Activated CD4-positive, alpha-beta T cell treated with anti-CD3 and anti-CD28 coated beads, Interleukin-2, amount 10 ng/mL, durations not matched to agents 7 days and 5 days (primary cell): ENCODE measurements at regions of chr13 and their contacts with region 1.

Region 1: DNA sequence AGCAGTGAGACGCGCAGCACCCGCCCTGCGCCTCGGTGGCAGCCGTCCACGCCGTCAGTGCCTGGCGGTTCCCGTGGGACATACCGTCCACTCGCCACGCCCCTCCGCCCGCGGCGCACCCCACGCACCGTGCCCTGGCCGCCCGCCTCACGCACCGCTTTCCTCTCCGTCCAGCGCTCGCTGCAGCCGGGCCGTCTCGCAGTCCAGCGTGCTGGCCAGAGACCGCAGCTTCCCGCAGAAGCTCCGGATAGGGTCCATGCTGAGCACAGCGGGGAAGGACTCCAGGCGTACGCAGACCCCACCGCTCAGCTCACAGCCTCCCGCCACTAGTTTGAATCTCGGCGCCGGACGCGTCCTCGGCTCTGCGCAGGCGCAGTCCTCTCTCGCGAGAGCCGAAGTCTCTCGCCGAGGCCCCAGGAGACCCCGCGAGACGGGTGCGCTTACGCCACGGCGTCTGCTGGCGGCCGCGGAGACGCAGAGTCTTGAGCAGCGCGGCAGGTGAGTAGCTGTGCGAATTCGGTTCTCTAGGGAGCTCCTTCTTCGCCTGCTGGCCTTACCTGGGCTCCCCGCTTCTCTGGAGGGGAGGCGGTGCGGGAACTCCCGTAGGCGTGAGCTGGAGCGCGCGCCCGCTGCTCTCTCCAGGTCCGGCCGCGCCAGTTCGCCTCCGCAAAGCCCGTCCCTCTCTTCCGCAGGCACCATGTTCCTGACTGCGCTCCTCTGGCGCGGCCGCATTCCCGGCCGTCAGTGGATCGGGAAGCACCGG is at the starts of genes MRPL57 and SKA3:
- DNase-seq: peak; percentile 94
- H3K4me3 Mint-ChIP-seq: peak within 1 kb of the TSS; percentile 99
- H3K27ac Mint-ChIP-seq: peak within 1 kb of the TSS; percentile 98
- H3K4me1 Mint-ChIP-seq: peaks cover 31% of the 10 kb centered on the region
- H3K27me3 Mint-ChIP-seq: no peaks in the 10 kb centered on the region
- total RNA-seq, gene MRPL57: 18.7 to 18.8 TPM
- total RNA-seq, gene SKA3: 42.2 to 50.7 TPM

Region 2: DNA sequence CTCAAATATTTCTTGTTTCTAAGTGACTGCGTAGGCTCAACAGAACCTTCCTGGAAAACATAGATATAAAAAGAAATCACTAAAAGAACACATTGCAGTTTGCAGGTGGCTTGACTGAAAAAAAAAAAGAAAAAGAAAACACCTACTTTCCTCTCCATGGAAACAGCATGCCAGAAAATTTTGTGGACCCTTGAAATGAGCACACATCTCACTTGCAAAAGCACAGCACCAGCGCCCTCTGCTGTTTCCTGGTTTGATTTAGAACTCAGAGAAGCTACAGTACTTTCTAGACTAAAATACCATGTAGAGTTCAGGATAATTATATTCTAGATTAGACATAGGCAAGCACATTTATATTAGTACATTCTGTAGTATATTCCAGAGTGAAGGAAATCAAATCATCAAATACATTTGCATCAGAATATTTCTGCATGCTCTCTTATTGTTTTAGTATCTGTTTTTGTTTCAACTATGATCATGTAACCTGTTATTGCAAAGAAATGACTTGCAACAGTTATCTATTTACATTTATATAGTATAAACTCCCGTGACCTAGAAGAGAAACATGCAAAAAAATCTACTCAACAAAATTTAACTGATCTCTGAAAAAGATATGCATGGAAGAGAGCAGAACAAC is 251.5 kb before region 1 on chr13:
- CTCF ChIA-PET with region 1: no interaction called
- POLR2A ChIA-PET with region 1: no interaction called
- DNase-seq: peak; percentile 84
- H3K4me3 Mint-ChIP-seq: no peak overlapping the region
- H3K27ac Mint-ChIP-seq: no peak overlapping the region
- H3K4me1 Mint-ChIP-seq: no peaks in the 10 kb centered on the region
- H3K27me3 Mint-ChIP-seq: no peaks in the 10 kb centered on the region

Region 3: GRCh38 chr13:21149568-21149967 is 26.8 kb before region 1 on chr13:
- CTCF ChIA-PET with region 1: interaction called, 11 read pairs
- POLR2A ChIA-PET with region 1: no interaction called
- DNase-seq: no peak
- H3K4me3 Mint-ChIP-seq: no peak overlapping the region
- H3K27ac Mint-ChIP-seq: no peak overlapping the region
- H3K4me1 Mint-ChIP-seq: peaks cover 8% of the 10 kb centered on the region
- H3K27me3 Mint-ChIP-seq: no peaks in the 10 kb centered on the region

Region 4: GRCh38 chr13:21164631-21165030 is 11.8 kb before region 1 on chr13:
- CTCF ChIA-PET with region 1: interaction called, 17 read pairs
- POLR2A ChIA-PET with region 1: interaction called, 3 read pairs
- DNase-seq: no peak
- H3K4me3 Mint-ChIP-seq: no peak overlapping the region
- H3K27ac Mint-ChIP-seq: no peak overlapping the region
- H3K4me1 Mint-ChIP-seq: no peaks in the 10 kb centered on the region
- H3K27me3 Mint-ChIP-seq: no peaks in the 10 kb centered on the region

Region 5: DNA sequence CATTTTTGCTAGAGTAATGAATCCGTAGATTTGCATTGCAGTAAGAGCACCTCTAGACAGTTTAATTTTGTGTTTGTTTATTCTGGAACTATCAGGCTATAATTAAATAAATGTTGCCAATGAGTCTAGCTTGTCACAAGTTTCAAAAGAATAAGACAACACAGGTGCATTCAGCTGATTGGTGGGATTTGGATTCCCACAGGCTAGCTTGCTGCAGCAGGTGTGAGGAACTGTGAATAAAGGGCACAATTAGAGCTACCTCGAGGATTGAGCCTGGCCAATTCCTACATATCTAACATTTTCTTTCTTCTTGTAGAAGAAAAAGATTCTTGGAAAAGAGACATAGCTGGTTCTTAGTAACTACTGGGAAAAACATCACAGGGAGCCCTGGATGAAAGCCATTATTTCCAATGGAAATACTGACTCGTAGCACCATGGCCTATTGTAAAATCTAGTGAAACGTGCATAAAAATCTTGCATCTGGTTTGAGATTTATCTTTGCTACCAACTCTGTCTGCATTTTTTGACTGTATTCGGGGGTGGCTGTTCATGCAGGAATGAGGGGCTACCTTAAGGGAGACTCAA is 855.4 kb after region 1 on chr13:
- CTCF ChIA-PET with region 1: no interaction called
- POLR2A ChIA-PET with region 1: no interaction called
- DNase-seq: no peak
- H3K4me3 Mint-ChIP-seq: no peak overlapping the region
- H3K27ac Mint-ChIP-seq: no peak overlapping the region
- H3K4me1 Mint-ChIP-seq: no peaks in the 10 kb centered on the region
- H3K27me3 Mint-ChIP-seq: peaks cover 3% of the 10 kb centered on the region